OCI-LY7 (cell line): ENCODE measurements at regions of chr6 and their contacts with region 1.

Region 1: DNA sequence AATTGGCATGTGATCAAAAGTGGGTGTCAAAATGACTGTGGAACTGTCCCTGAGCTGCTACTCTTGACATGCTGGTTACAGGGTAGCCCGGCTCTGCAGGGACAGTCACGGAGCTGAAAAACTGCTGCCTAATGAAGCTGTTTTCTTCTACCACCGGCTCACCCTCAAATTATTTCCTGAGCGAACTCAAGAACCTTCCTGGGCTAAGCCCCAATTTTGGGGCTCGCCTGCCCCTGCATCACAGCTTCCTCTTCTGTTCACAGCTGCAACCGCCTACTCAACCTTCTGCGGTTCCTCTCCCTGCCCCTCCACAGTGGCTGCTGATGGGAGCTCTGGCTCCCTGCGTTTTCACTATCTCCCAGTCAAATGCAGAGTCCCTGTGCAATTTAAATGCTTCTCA is 110.8 kb upstream of the MLN start:
- DNase-seq: peak; percentile 11
- H3K4me3 ChIP-seq: no peak overlapping the region
- H3K27ac ChIP-seq: no peak overlapping the region
- H3K4me1 ChIP-seq: no peaks in the 10 kb centered on the region
- CTCF ChIP-seq: no peak

Region 2: GRCh38 chr6:33851959-33852358 is 62.7 kb before region 1 on chr6:
- CTCF ChIA-PET with region 1: interaction called, 16 read pairs
- POLR2A ChIA-PET with region 1: no interaction called
- intact Hi-C with region 1: no loop called
- DNase-seq: no peak
- H3K4me3 ChIP-seq: no peak overlapping the region
- H3K27ac ChIP-seq: no peak overlapping the region
- H3K4me1 ChIP-seq: no peaks in the 10 kb centered on the region
- CTCF ChIP-seq: 0 out of 2 replicates have a peak, but pooled peaks have one; percentile 27

Region 3: DNA sequence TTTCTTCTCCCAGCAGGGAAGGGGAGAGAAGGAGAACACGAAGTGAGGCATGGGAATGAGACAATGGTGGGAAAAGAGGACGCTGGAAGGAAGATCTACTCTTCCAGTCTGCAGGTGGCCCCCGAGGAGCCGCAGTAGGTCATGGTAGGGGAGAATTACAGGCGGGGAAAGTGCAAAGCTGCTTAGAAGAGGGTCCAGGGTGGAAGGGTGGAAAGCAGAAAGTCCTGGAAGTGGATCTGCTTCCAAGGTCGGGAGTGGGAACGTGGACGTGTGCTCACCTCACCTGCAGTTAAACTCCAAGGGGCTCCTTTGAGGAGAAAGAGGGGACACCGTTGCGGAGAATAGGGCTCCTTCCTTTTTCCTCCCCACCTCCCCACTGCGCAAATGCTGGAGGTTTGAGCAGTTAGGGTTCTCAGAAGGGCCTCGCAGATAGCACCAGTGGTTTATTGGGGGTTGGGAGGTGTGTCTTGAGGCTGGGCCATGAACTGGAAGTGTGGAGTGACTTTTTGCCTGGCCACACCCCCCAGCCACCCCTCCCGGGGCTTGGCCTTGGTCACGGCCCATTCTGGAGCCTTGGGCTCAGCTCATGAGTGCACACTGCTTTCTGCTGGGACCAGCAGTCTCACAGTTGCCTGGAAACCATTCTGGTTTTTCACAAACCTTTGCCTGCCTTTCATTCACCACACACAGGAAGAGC is 10.4 kb before region 1 on chr6:
- CTCF ChIA-PET with region 1: no interaction called
- POLR2A ChIA-PET with region 1: no interaction called
- intact Hi-C with region 1: no loop called
- DNase-seq: no peak
- H3K4me3 ChIP-seq: no peak overlapping the region
- H3K27ac ChIP-seq: no peak overlapping the region
- H3K4me1 ChIP-seq: no peaks in the 10 kb centered on the region
- CTCF ChIP-seq: no peak